Prostate gland (tissue), 2 donors: ENCODE measurements at regions of chr2 and their contacts with region 1.

Region 1: DNA sequence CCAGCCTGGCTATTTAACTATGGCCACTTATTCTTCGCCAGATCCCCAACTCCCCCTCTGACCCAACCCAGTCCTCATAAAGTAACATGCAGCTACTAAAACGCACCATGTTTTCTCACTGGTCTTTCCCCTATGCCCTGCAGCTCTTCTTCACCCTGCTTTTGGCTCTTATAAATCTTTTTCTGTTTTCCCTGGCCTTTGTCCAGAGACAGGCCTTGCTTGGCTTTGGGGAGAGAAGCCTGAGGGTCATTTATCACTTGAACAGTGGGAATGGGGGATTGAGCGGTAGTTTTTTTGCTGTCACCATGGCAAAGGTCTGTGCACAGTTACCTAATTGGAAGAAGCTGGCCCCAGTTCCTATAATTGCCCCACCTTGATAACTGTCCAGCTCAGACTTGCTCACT is 202.9 kb upstream of the NT5C1B start:
- DNase-seq: no peak
- H3K4me3 ChIP-seq: no peak overlapping the region
- H3K27ac ChIP-seq: no peak overlapping the region
- H3K4me1 ChIP-seq: no peaks in the 10 kb centered on the region
- H3K27me3 ChIP-seq: no peaks in the 10 kb centered on the region
- CTCF ChIP-seq: no peak
- POLR2A ChIP-seq: no peak

Region 2: GRCh38 chr2:17976871-17977746 is 815.1 kb before region 1 on chr2:
- intact Hi-C with region 1: loop called (anchors 10 kb)
- DNase-seq: no peak
- H3K4me3 ChIP-seq: no peak overlapping the region
- H3K27ac ChIP-seq: peak overlapping the region in 1 of 2 donors; percentile 29
- H3K4me1 ChIP-seq: no peaks in the 10 kb centered on the region
- H3K27me3 ChIP-seq: no peaks in the 10 kb centered on the region
- CTCF ChIP-seq: no peak
- POLR2A ChIP-seq: no peak